Transverse colon (tissue), 4 donors: ENCODE measurements at regions of chr12 and their contacts with region 1.

Region 1: GRCh38 chr12:6873094-6874014 is at the start of gene SPSB2:
- DNase-seq: peak; percentile 99
- H3K4me3 ChIP-seq: peak within 1 kb of the TSS; percentile 58 to 81 (median 69)
- H3K27ac ChIP-seq: peak within 1 kb of the TSS; percentile 89 to 99 (median 92)
- H3K4me1 ChIP-seq: peaks cover 23 to 49% (median 41%) of the 10 kb centered on the region in 4 donors
- H3K27me3 ChIP-seq: no peaks in the 10 kb centered on the region
- CTCF ChIP-seq: peak in 1 of 5 experiments; percentile 2
- EP300 ChIP-seq: no peak
- POLR2A ChIP-seq: peak; percentile 83
- total RNA-seq, gene SPSB2: 4.5 to 21.0 (median 8.2) TPM

Region 2: GRCh38 chr12:6764011-6764828 is 109.1 kb before region 1 on chr12:
- in situ Hi-C with region 1: no loop called
- intact Hi-C with region 1: no loop called
- DNase-seq: peak; percentile 89
- H3K4me3 ChIP-seq: peak overlapping the region in 1 of 4 donors; percentile 32
- H3K27ac ChIP-seq: peak overlapping the region; percentile 92 to 94 (median 93)
- H3K4me1 ChIP-seq: peaks cover 17 to 50% (median 41%) of the 10 kb centered on the region in 4 donors
- H3K27me3 ChIP-seq: no peaks in the 10 kb centered on the region
- CTCF ChIP-seq: no peak
- EP300 ChIP-seq: no peak
- POLR2A ChIP-seq: no peak

Region 3: GRCh38 chr12:6839482-6840201 is 33.7 kb before region 1 on chr12:
- in situ Hi-C with region 1: no loop called
- intact Hi-C with region 1: no loop called
- DNase-seq: peak; percentile 77
- H3K4me3 ChIP-seq: no peak overlapping the region
- H3K27ac ChIP-seq: peak overlapping the region in 2 of 4 donors; percentile 16 to 46
- H3K4me1 ChIP-seq: no peaks in the 10 kb centered on the region
- H3K27me3 ChIP-seq: no peaks in the 10 kb centered on the region
- CTCF ChIP-seq: no peak
- EP300 ChIP-seq: no peak
- POLR2A ChIP-seq: no peak

Region 4: GRCh38 chr12:6937481-6938297 is 64.3 kb after region 1 on chr12:
- in situ Hi-C with region 1: no loop called
- intact Hi-C with region 1: loop called (anchors 5 kb)
- DNase-seq: peak; percentile 95
- H3K4me3 ChIP-seq: peak overlapping the region; percentile 43 to 59 (median 52)
- H3K27ac ChIP-seq: peak overlapping the region; percentile 90 to 99 (median 96)
- H3K4me1 ChIP-seq: peaks cover 14 to 52% (median 40%) of the 10 kb centered on the region in 4 donors
- H3K27me3 ChIP-seq: no peaks in the 10 kb centered on the region
- CTCF ChIP-seq: peak; percentile 82 to 99 (median 96)
- EP300 ChIP-seq: no peak
- POLR2A ChIP-seq: peak; percentile 90